MCF 10A (cell line): ENCODE measurements at regions of chr4 and their contacts with region 1.

Region 1: GRCh38 chr4:174282836-174283506 is 496 bp downstream of the FBXO8 start:
- DNase-seq: peak; percentile 97
- H3K4me3 Mint-ChIP-seq: peak overlapping the region; percentile 99
- H3K27ac Mint-ChIP-seq: peak overlapping the region; percentile 98
- H3K4me1 Mint-ChIP-seq: peaks cover 38% of the 10 kb centered on the region
- H3K27me3 Mint-ChIP-seq: no peaks in the 10 kb centered on the region
- CTCF ChIP-seq: no peak

Region 2: GRCh38 chr4:174173360-174173759 is 109.6 kb before region 1 on chr4:
- CTCF ChIA-PET with region 1: no interaction called
- POLR2A ChIA-PET with region 1: no interaction called
- intact Hi-C with region 1: no loop called
- DNase-seq: no peak
- H3K4me3 Mint-ChIP-seq: no peak overlapping the region
- H3K27ac Mint-ChIP-seq: no peak overlapping the region
- H3K4me1 Mint-ChIP-seq: no peaks in the 10 kb centered on the region
- H3K27me3 Mint-ChIP-seq: peaks cover 93% of the 10 kb centered on the region
- CTCF ChIP-seq: no peak

Region 3: GRCh38 chr4:174222266-174222872 is 60.6 kb before region 1 on chr4:
- CTCF ChIA-PET with region 1: interaction called, 6 read pairs
- POLR2A ChIA-PET with region 1: interaction called, 11 read pairs
- intact Hi-C with region 1: loop called (anchors 1 kb)
- DNase-seq: peak; percentile 52
- H3K4me3 Mint-ChIP-seq: no peak overlapping the region
- H3K27ac Mint-ChIP-seq: no peak overlapping the region
- H3K4me1 Mint-ChIP-seq: no peaks in the 10 kb centered on the region
- H3K27me3 Mint-ChIP-seq: no peaks in the 10 kb centered on the region
- CTCF ChIP-seq: peak; percentile 58

Region 4: DNA sequence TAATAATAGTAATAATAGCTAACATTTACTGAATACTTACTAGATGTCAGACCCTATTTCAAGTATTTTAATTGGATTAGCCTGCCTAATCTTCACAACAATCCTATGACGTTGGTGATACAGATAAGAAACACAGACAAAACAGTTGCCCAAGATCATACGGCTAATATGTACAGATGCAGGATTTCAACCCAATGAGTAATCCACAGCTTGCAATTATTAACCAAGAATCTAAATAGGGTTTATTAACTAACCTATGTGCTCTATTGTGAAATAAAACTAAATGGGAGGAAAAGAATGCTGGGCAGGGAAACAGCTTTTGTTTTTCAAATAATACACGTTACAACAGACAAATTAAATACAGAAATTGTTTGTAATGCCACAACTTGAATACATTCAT is 22.9 kb before region 1 on chr4:
- CTCF ChIA-PET with region 1: no interaction called
- POLR2A ChIA-PET with region 1: interaction called, 66 read pairs
- intact Hi-C with region 1: no loop called
- DNase-seq: peak; percentile 52
- H3K4me3 Mint-ChIP-seq: peak overlapping the region; percentile 40
- H3K27ac Mint-ChIP-seq: peak overlapping the region; percentile 71
- H3K4me1 Mint-ChIP-seq: no peaks in the 10 kb centered on the region
- H3K27me3 Mint-ChIP-seq: no peaks in the 10 kb centered on the region
- CTCF ChIP-seq: no peak

Region 5: GRCh38 chr4:174303687-174304086 is 20.7 kb after region 1 on chr4:
- CTCF ChIA-PET with region 1: no interaction called
- POLR2A ChIA-PET with region 1: interaction called, 15 read pairs
- intact Hi-C with region 1: no loop called
- DNase-seq: no peak
- H3K4me3 Mint-ChIP-seq: no peak overlapping the region
- H3K27ac Mint-ChIP-seq: no peak overlapping the region
- H3K4me1 Mint-ChIP-seq: no peaks in the 10 kb centered on the region
- H3K27me3 Mint-ChIP-seq: no peaks in the 10 kb centered on the region
- CTCF ChIP-seq: no peak

Region 6: GRCh38 chr4:174604198-174604597 is 321.2 kb after region 1 on chr4:
- CTCF ChIA-PET with region 1: no interaction called
- POLR2A ChIA-PET with region 1: no interaction called
- intact Hi-C with region 1: no loop called
- DNase-seq: peak; percentile 53
- H3K4me3 Mint-ChIP-seq: no peak overlapping the region
- H3K27ac Mint-ChIP-seq: no peak overlapping the region
- H3K4me1 Mint-ChIP-seq: no peaks in the 10 kb centered on the region
- H3K27me3 Mint-ChIP-seq: no peaks in the 10 kb centered on the region
- CTCF ChIP-seq: no peak